ENCODE measurements at regions of chr9 and their contacts with region 1.

Region 1: DNA sequence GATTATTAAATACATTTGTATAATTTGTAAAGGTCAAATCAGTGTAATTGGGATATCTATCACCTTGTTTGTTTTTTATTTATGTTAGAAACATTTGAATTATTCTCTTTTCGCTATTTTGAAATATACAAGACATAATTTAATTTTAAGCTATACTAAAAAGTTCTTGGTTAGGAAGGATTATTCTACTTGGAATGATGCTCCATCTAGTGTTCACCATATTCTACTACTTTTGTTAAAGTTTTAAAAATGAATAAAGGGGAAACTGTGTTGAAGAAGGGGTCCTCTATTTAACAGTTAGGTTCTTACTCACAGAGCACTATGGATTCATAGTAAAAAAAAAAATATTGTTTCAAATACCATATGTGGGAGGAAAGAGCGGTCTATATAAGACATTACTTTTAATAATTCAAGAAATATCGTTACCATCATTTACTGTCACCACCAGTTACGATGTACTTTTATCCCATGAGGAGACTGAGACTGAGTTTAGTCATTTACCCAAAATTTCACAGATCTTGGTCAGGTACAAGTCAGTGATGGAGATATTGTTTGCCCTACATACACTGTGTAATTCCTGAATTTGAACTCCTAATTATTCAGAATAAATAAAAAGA is 6.3 kb upstream of the STOM start:
- DNase-seq: no peak
- ATAC-seq: peak in 1 of 8 donors; percentile 42
- H3K4me3 ChIP-seq: no peak overlapping the region
- H3K27ac ChIP-seq: peak overlapping the region in 2 of 10 donors; percentile 97
- H3K4me1 ChIP-seq: peaks cover 3 to 48% (median 38%) of the 10 kb centered on the region in 9 donors
- H3K27me3 ChIP-seq: no peaks in the 10 kb centered on the region
- CTCF ChIP-seq: peak; percentile 11 to 74 (median 55)

Region 2: DNA sequence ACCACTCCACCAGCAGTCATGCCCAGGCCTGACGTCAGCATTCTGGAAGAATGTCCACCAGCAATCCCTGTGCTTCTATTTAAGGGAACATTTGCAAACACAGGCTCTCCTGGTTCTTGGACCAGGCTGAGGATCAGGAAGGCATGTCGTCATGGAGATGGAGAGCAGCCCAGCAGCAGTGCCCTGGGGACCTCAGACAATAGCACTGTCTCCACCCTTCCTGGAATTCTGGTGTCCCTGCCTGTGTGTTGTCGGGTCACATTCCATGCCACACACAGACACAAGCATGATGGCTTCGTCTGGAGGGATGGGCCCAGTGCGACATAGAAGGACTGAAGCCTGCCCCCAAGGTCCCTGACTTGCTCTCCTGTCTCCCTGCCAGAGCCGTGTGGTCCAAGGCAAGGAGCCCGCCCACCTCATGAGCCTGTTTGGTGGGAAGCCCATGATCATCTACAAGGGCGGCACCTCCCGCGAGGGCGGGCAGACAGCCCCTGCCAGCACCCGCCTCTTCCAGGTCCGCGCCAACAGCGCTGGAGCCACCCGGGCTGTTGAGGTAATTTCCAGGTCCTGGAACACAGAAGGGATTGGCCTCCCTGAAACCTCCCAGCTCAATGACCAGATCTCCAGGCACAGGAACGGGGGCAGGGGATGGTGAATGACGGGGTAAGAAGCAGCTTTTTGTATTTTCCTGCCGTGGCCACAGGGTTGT is 50.0 kb before region 1 on chr9:
- intact Hi-C with region 1: loop called in 8 of 10 experiments (anchors 2 to 10 kb)
- DNase-seq: peak; percentile 86 to 94
- ATAC-seq: peak; percentile 90 to 95 (median 92)
- H3K4me3 ChIP-seq: peak overlapping the region in 3 of 10 donors; percentile 2 to 31 (median 24)
- H3K27ac ChIP-seq: peak overlapping the region; percentile 85 to 98 (median 92)
- H3K4me1 ChIP-seq: peaks cover 32 to 96% (median 53%) of the 10 kb centered on the region in 9 donors
- H3K27me3 ChIP-seq: no peaks in the 10 kb centered on the region
- CTCF ChIP-seq: no peak

Region 3: GRCh38 chr9:121399883-121400607 is 23.7 kb after region 1 on chr9:
- intact Hi-C with region 1: loop called in 1 of 10 experiments (anchors 2 kb)
- DNase-seq: peak in 1 of 2 donors; percentile 19
- ATAC-seq: peak in 5 of 8 donors; percentile 46 to 68 (median 64)
- H3K4me3 ChIP-seq: no peak overlapping the region
- H3K27ac ChIP-seq: no peak overlapping the region
- H3K4me1 ChIP-seq: peaks cover 0 to 6% (median 0%) of the 10 kb centered on the region in 9 donors
- H3K27me3 ChIP-seq: no peaks in the 10 kb centered on the region
- CTCF ChIP-seq: peak; percentile 60 to 80 (median 72)

Measured in heart right ventricle (tissue), 16 donors.